ENCODE measurements at regions of chr14 and their contacts with region 1.

Region 1: DNA sequence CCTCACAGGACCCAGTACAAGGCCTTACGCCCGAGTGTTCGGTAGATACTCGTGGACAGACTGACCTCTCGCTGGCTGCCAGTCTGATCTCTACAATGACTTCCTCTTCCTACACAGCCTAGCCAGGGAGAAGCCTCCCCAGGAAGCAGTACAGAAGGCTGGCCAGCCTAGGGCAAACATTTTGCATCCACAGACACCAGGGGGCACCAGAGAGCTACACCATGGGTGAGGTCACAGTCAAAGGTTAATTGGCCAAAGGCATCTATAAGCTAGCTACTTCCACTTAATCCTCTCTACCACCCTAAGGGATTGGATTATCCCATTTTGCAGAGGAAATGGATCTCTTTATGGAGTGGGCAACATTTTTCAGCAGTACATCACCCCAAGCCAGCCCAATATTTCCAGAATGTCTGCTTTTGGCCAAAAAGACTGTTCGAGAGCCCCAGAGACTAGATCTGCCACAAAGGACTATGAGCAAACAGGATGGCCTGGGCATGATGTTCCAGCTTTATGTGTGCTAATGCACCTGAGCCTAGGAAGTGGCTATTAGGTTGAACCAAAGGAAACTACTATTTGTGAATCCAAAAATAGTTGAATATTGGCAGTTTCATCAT is 14.6 kb upstream of the PNMA1 start:
- DNase-seq: peak; percentile 88 to 94
- ATAC-seq: peak; percentile 80

Region 2: GRCh38 chr14:73825551-73826188 is 96.8 kb after region 1 on chr14:
- intact Hi-C with region 1: loop called (anchors 5 to 10 kb)
- DNase-seq: peak; percentile 83 to 97
- ATAC-seq: peak; percentile 90

Measured in left colon (tissue), 2 donors.